ENCODE measurements at regions of chr3 and their contacts with region 1.

Region 1: DNA sequence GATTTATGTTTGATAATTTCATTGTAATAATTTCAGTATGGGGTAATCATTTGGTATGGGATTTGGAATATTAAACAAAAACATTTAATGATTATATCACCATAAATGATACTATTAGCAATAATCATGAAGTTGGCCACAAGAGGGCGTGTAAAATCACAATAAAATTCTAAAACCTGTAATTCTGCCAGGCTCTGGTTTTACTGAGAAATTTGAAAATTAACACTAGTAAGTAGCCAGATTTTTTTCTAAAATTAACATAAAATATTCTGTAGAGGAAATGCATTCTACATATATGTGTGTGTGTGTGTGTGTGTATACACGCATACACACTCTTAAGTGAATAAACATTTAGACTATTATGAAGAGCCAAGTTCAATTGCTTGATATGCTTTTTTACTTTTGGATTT is 40.5 kb downstream of the FEZF2 start:
- DNase-seq: no peak

Region 2: GRCh38 chr3:62559831-62560445 is 227.1 kb after region 1 on chr3:
- intact Hi-C with region 1: loop called in 1 of 2 experiments (anchors 10 kb)
- DNase-seq: no peak